Prostate gland (tissue), 2 donors: ENCODE measurements at regions of chr1 and their contacts with region 1.

Region 1: GRCh38 chr1:6239950-6240768 is 3.8 kb upstream of the HES3 start:
- DNase-seq: no peak
- H3K4me3 ChIP-seq: no peak overlapping the region
- H3K27ac ChIP-seq: no peak overlapping the region
- H3K4me1 ChIP-seq: peaks cover 7% of the 10 kb centered on the region
- H3K27me3 ChIP-seq: peaks cover 27% of the 10 kb centered on the region
- CTCF ChIP-seq: no peak
- POLR2A ChIP-seq: no peak

Region 2: DNA sequence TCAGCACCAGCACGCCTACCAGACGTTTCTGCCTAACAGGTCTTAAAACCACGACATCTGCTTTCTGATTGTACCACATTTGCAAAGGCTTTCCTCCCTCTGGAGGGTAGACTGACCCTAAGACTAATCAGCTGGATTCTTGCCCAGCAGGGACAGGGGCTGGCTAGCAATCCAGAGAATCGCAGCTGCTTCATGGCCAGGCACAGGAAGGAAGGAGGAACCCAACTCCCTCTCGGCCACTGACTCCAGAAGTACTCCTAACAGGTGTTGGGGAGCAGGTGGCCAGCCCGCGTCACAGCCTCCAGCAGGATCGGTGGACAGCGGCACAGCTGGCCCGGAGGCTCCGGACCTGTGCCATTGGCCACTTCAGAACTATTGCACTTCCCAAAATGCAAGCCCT is 428.7 kb before region 1 on chr1:
- intact Hi-C with region 1: no loop called
- DNase-seq: no peak
- H3K4me3 ChIP-seq: no peak overlapping the region
- H3K27ac ChIP-seq: no peak overlapping the region
- H3K4me1 ChIP-seq: no peaks in the 10 kb centered on the region
- H3K27me3 ChIP-seq: no peaks in the 10 kb centered on the region
- CTCF ChIP-seq: no peak
- POLR2A ChIP-seq: no peak

Region 3: GRCh38 chr1:6052543-6053205 is 187.5 kb before region 1 on chr1:
- intact Hi-C with region 1: loop called (anchors 5 kb)
- DNase-seq: peak; percentile 70
- H3K4me3 ChIP-seq: no peak overlapping the region
- H3K27ac ChIP-seq: no peak overlapping the region
- H3K4me1 ChIP-seq: peaks cover 7% of the 10 kb centered on the region
- H3K27me3 ChIP-seq: no peaks in the 10 kb centered on the region
- CTCF ChIP-seq: peak in 3 of 4 experiments; percentile 44 to 58 (median 46)
- POLR2A ChIP-seq: no peak

Region 4: DNA sequence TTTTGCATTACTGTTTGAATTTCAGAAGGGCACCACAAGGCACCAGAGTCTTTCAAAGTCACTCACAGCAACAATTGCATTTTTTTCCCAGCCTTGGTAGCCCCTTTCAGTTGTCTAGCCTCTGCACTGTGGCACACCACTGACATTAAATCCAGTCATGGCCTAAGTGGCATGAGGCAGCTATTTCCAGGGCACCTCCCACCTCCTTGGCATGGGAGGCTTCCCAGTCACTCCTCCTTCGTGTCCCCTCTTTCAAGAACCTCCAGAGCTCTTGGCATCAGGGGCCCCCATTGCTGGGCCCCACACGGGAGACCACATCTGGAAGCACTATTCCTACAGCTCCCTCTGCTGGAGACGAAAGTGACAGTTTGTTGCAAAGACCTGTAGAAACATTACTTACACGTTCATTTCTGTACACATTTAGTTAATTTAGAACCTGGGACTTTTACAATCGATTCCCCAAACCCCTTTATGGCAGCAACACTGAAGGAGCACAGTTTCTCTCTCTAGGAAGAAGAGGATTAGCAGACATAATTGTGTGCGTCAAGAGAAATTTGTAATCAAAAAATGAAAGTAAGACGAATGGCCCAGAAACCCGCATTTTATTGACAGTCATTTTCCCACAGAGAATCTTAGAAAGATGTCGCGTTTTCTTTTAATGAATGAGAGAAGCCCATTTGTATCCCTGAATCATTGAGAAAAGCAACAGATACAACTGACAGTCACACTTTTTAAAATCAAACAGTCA is 54.4 kb before region 1 on chr1:
- intact Hi-C with region 1: no loop called
- DNase-seq: no peak
- H3K4me3 ChIP-seq: no peak overlapping the region
- H3K27ac ChIP-seq: no peak overlapping the region
- H3K4me1 ChIP-seq: no peaks in the 10 kb centered on the region
- H3K27me3 ChIP-seq: no peaks in the 10 kb centered on the region
- CTCF ChIP-seq: peak in 2 of 4 experiments; percentile 30 to 33
- POLR2A ChIP-seq: no peak

Region 5: GRCh38 chr1:6205849-6206519 is 34.2 kb before region 1 on chr1 and contains the start of gene RNF207:
- intact Hi-C with region 1: loop called (anchors 5 kb)
- DNase-seq: peak; percentile 62
- H3K4me3 ChIP-seq: peak within 1 kb of the TSS; percentile 42 to 43
- H3K27ac ChIP-seq: peak within 1 kb of the TSS; percentile 55 to 79
- H3K4me1 ChIP-seq: no peaks in the 10 kb centered on the region
- H3K27me3 ChIP-seq: no peaks in the 10 kb centered on the region
- CTCF ChIP-seq: peak in 1 of 4 experiments; percentile 5
- POLR2A ChIP-seq: peak; percentile 80
- total RNA-seq, gene RNF207: 45.7 to 47.4 TPM